ENCODE measurements at regions of chr1 and their contacts with region 1.

Region 1: GRCh38 chr1:193059268-193060225 is at the starts of genes RO60 and UCHL5:
- DNase-seq: peak; percentile 98
- H3K4me3 Mint-ChIP-seq: peak within 1 kb of the TSS; percentile 98
- H3K27ac Mint-ChIP-seq: peak within 1 kb of the TSS; percentile 99
- H3K4me1 Mint-ChIP-seq: peaks cover 47% of the 10 kb centered on the region
- H3K27me3 Mint-ChIP-seq: no peaks in the 10 kb centered on the region
- total RNA-seq, gene RO60: 70.2 and 70.9 TPM in 2 replicates
- total RNA-seq, gene UCHL5: 89.2 and 97.2 TPM in 2 replicates

Region 2: GRCh38 chr1:192609110-192610079 is 450.2 kb before region 1 on chr1:
- intact Hi-C with region 1: loop called (anchors 5 kb)
- DNase-seq: peak; percentile 85
- H3K4me3 Mint-ChIP-seq: peak overlapping the region; percentile 63
- H3K27ac Mint-ChIP-seq: peak overlapping the region; percentile 28
- H3K4me1 Mint-ChIP-seq: peaks cover 13% of the 10 kb centered on the region
- H3K27me3 Mint-ChIP-seq: no peaks in the 10 kb centered on the region

Region 3: DNA sequence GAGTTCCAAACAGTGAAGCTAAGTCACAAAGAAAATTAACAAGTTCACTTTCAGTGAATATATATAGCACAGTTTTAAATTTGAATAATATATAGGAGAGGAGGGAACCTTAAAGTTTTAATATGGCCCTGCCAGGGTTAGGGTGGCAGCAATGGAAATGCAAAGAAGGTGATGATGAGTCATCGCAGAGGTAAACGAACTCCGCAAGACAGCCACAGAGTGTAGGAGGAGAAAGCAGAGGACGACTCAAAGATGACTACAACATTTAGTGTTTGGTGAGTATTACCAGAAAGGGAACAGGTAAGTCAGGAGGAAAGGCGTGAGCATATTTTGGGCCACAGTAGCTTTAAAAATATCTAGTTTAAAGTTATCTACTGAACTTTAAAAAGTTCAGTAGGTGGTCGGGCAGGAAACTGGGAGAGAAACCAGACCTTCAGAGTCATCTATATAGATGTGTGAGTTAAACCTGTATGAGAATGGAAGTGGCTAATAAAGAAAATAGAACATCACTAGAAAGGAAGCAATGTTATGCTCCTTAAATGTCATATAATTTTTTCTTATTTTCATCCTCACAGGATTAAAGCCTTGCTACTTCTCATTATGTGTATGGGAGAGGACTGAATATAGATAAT is 76.1 kb before region 1 on chr1:
- intact Hi-C with region 1: loop called (anchors 1 kb)
- DNase-seq: peak; percentile 69
- H3K4me3 Mint-ChIP-seq: peak overlapping the region; percentile 36
- H3K27ac Mint-ChIP-seq: peak overlapping the region; percentile 78
- H3K4me1 Mint-ChIP-seq: peaks cover 47% of the 10 kb centered on the region
- H3K27me3 Mint-ChIP-seq: no peaks in the 10 kb centered on the region

Region 4: GRCh38 chr1:193083365-193084088 is 24.0 kb after region 1 on chr1:
- intact Hi-C with region 1: no loop called
- DNase-seq: no peak
- H3K4me3 Mint-ChIP-seq: no peak overlapping the region
- H3K27ac Mint-ChIP-seq: no peak overlapping the region
- H3K4me1 Mint-ChIP-seq: no peaks in the 10 kb centered on the region
- H3K27me3 Mint-ChIP-seq: no peaks in the 10 kb centered on the region

Region 5: DNA sequence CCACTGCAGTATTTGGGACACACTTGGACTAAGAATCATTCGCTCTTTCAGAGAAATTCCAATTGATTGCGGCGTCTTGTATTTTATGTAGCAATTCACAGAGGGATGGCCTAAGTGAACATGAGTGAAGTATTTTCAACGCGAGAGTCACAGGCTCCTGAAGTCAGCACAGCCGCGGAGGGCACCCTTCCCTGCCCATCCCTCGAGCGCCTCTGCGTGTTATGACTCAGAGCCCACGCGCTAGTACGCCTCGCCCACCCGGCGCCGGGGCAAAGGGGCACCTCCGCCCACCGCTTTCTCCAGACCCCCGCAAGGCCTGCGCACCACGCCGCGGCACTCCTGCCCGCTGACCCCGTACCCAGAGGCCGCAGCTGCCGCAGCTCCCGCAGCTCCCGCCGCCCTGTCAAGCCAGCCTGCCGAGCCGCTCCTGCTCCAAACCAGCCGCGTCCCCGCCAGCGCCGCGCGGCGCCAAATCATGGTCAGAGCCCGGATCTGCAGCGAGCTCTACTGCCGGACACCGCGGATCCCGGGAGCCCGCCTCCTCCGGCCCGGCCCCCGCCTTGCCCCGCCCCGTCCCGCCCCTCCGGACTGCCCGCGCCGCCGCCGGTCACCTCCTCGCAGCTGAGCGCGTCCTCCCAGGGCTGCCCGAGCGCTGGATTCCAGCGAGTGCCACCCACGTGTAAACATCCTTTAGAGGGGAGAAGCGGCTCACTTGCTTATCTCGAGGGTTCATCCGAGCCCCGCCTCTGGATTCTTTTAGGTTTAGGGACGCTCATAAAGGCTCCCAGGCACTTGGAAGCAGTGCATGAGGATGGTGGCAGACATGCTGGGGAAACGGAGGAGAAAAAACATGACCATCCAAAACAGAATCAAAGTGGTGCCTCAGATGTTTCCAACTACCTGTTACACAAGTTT is 45.6 kb after region 1 on chr1 and contains the start of gene GLRX2:
- intact Hi-C with region 1: loop called (anchors 1 kb)
- DNase-seq: peak; percentile 87
- H3K4me3 Mint-ChIP-seq: peak within 1 kb of the TSS; percentile 94
- H3K27ac Mint-ChIP-seq: peak within 1 kb of the TSS; percentile 79
- H3K4me1 Mint-ChIP-seq: peaks cover 20% of the 10 kb centered on the region
- H3K27me3 Mint-ChIP-seq: peaks cover 7% of the 10 kb centered on the region
- total RNA-seq, gene GLRX2: 29.4 and 32.6 TPM in 2 replicates

Region 6: DNA sequence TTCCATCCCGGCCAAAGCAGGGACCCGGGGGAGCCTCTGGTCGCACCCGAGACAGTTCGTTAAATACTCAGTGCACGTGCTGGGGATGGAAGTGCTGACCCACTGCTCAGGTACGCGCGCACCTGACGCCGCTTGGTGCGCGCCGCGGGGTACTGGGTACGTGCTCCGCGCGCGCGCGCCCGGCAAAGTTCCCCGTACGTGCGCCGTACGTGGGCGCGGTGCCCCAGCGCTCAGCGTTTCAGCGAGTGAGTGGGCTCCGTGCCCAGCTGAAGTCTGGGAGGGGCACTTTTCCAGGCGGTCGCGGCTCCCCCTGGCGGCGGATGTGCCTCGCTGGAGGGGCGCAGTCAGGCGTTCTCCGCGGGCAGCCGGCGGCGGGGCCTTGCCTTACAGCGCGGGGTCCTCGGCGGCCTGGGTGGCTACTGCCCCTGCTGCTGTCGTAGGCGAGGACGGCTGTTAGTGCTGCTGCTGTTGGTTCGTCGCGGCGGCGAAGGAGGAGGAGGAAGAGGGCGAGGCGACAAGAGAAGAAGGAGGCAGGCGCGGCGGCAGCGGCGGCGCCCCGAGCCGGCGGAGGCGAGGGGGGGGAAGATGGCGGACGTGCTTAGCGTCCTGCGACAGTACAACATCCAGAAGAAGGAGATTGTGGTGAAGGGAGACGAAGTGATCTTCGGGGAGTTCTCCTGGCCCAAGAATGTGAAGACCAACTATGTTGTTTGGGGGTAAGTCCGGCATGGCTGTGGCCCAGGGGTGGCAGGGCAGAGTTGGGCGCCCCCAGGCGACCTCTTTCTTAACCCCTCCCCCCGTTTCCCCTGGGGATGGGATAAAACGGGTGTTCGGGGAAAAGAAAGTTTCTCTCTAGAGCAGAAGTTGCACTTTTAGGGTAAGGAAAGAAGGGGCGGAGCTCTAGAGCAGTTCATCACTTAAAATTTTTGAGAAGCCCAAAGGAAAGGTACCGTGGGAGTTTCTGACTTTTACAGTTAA is 62.4 kb after region 1 on chr1 and contains the start of gene CDC73:
- intact Hi-C with region 1: loop called (anchors 1 kb)
- DNase-seq: peak; percentile 99
- H3K4me3 Mint-ChIP-seq: peak within 1 kb of the TSS; percentile 100
- H3K27ac Mint-ChIP-seq: peak within 1 kb of the TSS; percentile 95
- H3K4me1 Mint-ChIP-seq: peaks cover 43% of the 10 kb centered on the region
- H3K27me3 Mint-ChIP-seq: peaks cover 10% of the 10 kb centered on the region
- total RNA-seq, gene CDC73: 55.2 and 56.0 TPM in 2 replicates

Region 7: GRCh38 chr1:193417945-193418744 is 358.6 kb after region 1 on chr1:
- intact Hi-C with region 1: loop called (anchors 5 kb)
- DNase-seq: peak; percentile 73
- H3K4me3 Mint-ChIP-seq: peak overlapping the region; percentile 76
- H3K27ac Mint-ChIP-seq: peak overlapping the region; percentile 67
- H3K4me1 Mint-ChIP-seq: peaks cover 38% of the 10 kb centered on the region
- H3K27me3 Mint-ChIP-seq: no peaks in the 10 kb centered on the region

Measured in activated CD4-positive, alpha-beta T cell treated with anti-CD3 and anti-CD28 coated beads, Interleukin-2, amount 10 ng/mL, durations not matched to agents 24 days and 14 days (primary cell).